Activated T-helper 1 cell treated with anti-CD3 and anti-CD28 coated beads, Interleukin-12 subunit alpha, Interleukin-12 subunit beta, Interleukin-2, Interleukin-4 antibody, amounts not matched to agents 30 ng/mL and 10 ng/mL and 1 ng/mL, durations not matched to agents 14 hours and 24 hours and 36 hours (primary cell): ENCODE measurements at regions of chr6 and their contacts with region 1.

Region 1: GRCh38 chr6:132483779-132484679 is 28.9 kb downstream of the STX7 start:
- DNase-seq: peak; percentile 19
- H3K4me3 Mint-ChIP-seq: no peak overlapping the region
- H3K27ac Mint-ChIP-seq: no peak overlapping the region
- H3K4me1 Mint-ChIP-seq: peaks cover 6% of the 10 kb centered on the region
- H3K27me3 Mint-ChIP-seq: no peaks in the 10 kb centered on the region

Region 2: DNA sequence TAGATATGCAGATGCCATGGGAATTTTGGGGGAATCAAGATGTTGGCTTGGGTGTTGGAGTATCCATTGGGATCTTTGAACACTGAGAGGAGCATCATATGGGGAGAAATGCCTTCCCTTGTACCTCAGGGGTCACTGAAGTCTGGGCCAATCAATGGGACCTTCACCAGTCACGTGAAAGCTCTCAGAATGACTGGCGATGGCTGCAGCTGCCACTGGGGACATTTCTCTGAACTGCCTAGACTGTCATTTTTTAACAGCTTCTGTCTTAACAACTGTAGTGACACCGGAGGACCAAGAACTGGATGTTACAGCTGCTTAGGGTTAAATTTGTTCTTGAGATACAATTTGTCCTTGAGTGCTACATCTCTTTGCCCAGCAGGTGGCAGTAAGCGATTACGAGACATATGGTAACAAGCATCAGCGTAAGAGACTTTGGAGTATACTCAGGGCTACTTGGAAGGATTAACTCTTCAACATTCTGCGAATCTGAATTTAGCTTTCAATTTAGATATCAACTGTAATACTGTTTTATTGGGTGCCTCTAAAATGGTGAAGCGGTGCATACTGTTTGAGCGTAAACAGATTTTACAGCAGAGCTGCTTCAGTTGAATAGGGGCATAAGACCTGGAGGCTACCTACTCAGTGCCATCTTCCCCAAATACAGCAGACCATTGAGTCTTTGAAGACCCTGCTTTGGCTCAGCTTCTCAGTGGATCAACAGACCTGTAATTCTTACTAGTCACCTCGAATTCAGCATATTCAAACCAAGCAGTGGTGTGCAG is 568.9 kb before region 1 on chr6:
- intact Hi-C with region 1: loop called (anchors 5 kb)
- DNase-seq: peak; percentile 20
- H3K4me3 Mint-ChIP-seq: no peak overlapping the region
- H3K27ac Mint-ChIP-seq: no peak overlapping the region
- H3K4me1 Mint-ChIP-seq: peaks cover 8% of the 10 kb centered on the region
- H3K27me3 Mint-ChIP-seq: peaks cover 30% of the 10 kb centered on the region

Region 3: DNA sequence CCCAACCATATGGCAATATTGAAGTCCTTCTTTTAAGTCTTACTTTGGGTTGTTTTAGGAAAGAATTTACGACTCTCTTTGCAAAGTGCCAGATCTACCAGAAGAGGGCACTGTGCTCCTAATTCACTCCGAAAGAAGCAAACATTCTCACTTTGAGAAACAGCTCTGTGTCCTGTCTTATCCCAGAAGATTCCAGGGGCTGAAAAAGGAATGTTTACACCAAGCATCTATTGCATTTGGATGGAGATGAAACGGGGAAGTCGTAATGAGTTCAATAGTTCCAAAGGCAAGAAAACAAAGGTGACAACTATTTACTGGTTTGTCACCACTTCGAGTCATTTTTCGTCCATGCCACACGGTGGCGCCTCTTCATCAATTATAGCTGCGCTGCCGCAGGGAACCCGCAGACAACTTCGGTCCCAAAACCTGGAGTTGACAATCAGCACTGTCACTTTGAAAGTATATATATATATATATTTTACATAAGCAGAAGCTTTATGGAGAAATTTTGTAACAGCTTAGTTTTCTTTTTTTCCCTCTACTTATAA is 204.4 kb before region 1 on chr6:
- intact Hi-C with region 1: loop called (anchors 1 kb)
- DNase-seq: peak; percentile 58
- H3K4me3 Mint-ChIP-seq: peak overlapping the region; percentile 75
- H3K27ac Mint-ChIP-seq: no peak overlapping the region
- H3K4me1 Mint-ChIP-seq: no peaks in the 10 kb centered on the region
- H3K27me3 Mint-ChIP-seq: peaks cover 15% of the 10 kb centered on the region

Region 4: DNA sequence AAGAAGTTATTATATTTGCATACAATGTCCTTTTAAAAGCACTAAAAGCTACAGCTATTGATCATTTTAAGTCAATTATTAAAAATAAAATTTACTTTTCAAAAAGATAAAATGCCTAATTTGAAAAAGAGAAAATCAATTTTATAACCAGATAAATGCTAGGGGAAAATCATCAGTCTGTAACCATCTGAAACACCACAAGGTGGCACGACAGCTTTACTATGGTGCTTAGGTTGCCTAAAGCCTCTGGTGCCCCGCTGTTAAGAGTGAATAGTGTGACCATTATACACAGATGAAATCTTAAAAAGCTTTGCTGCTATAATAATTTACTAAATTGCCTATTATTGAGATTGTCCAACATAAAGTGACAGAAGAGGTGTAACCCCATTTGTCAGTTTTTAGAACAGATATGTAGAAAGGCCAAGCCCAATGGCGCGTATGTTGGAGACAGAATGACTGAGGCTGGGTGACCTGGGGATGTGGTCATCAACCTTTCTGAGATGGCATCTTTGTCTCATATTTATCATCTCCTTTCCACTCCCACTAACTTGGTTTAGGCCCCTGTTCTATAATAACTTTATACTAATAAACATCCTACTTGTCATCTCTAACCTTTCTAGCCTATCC is 183.6 kb before region 1 on chr6:
- intact Hi-C with region 1: loop called (anchors 1 kb)
- DNase-seq: no peak
- H3K4me3 Mint-ChIP-seq: no peak overlapping the region
- H3K27ac Mint-ChIP-seq: no peak overlapping the region
- H3K4me1 Mint-ChIP-seq: no peaks in the 10 kb centered on the region
- H3K27me3 Mint-ChIP-seq: peaks cover 17% of the 10 kb centered on the region

Region 5: DNA sequence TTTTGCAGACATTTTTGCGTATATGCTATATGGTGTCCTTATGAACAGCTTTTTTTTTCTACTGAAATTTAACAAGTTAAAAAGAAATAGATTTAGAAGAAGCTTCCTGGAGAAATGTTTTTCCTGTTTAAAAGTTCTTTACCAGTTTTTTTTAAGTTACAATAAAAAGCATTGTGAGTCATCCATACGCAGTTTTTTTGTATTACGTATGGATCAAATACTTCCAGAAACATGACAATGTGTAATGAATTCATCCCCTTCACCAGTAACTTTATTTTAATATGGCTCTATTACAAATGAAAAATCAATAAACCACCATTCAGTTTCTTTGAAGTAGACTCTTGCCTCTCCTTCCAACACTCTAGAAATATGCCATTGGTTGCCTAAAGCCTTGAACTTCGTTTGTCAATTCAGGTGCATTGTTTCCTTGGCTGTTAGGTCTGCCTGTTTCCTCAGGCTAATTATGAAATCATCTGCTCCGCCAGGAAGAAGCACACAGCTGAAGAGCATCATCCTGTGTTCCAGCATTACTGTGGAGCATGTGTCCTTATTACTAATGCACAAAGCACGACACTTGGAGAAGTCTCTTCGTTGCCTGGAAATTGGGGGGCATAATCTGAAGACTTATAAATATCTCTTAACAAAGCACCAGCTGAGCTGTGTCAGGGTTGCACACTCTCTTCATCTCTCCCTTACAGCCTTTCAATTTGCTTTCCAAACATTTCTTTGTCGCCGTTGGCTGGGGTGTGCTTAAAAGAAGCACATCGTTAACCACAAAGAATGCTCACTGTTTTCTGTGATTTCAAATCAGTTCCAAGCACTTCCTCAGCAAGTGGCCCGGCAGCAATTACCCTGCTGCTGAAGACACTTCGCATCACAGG is 92.4 kb before region 1 on chr6:
- intact Hi-C with region 1: loop called (anchors 5 kb)
- DNase-seq: no peak
- H3K4me3 Mint-ChIP-seq: no peak overlapping the region
- H3K27ac Mint-ChIP-seq: no peak overlapping the region
- H3K4me1 Mint-ChIP-seq: no peaks in the 10 kb centered on the region
- H3K27me3 Mint-ChIP-seq: peaks cover 26% of the 10 kb centered on the region

Region 6: GRCh38 chr6:132512638-132513632 is 28.9 kb after region 1 on chr6 and contains the start of gene STX7:
- intact Hi-C with region 1: loop called (anchors 2 kb)
- DNase-seq: peak; percentile 83
- H3K4me3 Mint-ChIP-seq: peak within 1 kb of the TSS; percentile 97
- H3K27ac Mint-ChIP-seq: peak within 1 kb of the TSS; percentile 93
- H3K4me1 Mint-ChIP-seq: peaks cover 25% of the 10 kb centered on the region
- H3K27me3 Mint-ChIP-seq: peaks cover 20% of the 10 kb centered on the region
- total RNA-seq, gene STX7: 17.3 and 17.5 TPM in 2 replicates

Region 7: GRCh38 chr6:132820629-132821381 is 336.8 kb after region 1 on chr6:
- intact Hi-C with region 1: no loop called
- DNase-seq: no peak
- H3K4me3 Mint-ChIP-seq: no peak overlapping the region
- H3K27ac Mint-ChIP-seq: no peak overlapping the region
- H3K4me1 Mint-ChIP-seq: peaks cover 44% of the 10 kb centered on the region
- H3K27me3 Mint-ChIP-seq: peaks cover 3% of the 10 kb centered on the region